OCI-LY7 (cell line): ENCODE measurements at regions of chr11 and their contacts with region 1.

Region 1: GRCh38 chr11:121367001-121367843 is 74.7 kb downstream of the SC5D start:
- DNase-seq: peak; percentile 95
- H3K4me3 ChIP-seq: peak overlapping the region; percentile 35
- H3K27ac ChIP-seq: peak overlapping the region; percentile 98
- H3K4me1 ChIP-seq: peaks cover 86% of the 10 kb centered on the region
- CTCF ChIP-seq: 0 out of 2 replicates have a peak, but pooled peaks have one; percentile 14

Region 2: DNA sequence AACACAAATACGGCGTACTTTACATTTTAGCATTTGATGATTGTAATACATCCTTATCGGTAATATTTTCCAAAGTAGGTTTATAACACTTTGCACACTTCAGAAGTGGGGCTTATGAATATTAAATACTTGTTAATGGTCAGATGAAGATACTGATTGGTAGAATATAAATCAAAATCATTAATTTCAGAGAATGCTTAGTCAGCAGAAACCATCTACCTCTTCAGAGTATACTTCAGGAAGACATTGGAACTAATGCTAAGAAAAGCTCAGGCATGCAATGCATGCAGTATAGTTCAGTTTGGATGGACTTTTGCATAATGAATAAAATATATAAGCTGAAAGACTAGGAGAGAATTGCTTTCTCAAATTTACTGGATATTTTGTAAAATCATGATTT is 285.9 kb before region 1 on chr11:
- CTCF ChIA-PET with region 1: no interaction called
- POLR2A ChIA-PET with region 1: no interaction called
- intact Hi-C with region 1: no loop called
- DNase-seq: no peak
- H3K4me3 ChIP-seq: no peak overlapping the region
- H3K27ac ChIP-seq: no peak overlapping the region
- H3K4me1 ChIP-seq: no peaks in the 10 kb centered on the region
- CTCF ChIP-seq: no peak

Region 3: DNA sequence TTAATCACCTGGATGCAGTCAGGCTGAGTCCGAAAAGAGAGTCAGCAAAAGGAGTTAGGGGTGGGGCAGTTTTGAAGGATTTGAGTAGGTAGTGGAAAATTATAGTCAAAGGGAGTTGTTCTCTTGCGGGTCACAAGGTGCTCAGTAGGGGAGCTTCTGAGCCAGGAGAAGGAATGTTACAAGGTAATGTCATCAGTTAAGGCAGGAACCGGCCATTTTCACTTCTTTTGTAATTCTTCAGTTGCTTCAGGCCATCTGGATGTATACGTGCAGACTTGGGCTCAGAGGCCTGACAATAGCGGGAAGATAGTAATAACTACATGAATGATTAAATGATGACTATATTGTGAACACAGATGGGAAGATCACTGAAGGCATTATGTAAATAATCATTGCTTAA is 68.4 kb before region 1 on chr11:
- CTCF ChIA-PET with region 1: no interaction called
- POLR2A ChIA-PET with region 1: no interaction called
- intact Hi-C with region 1: no loop called
- DNase-seq: no peak
- H3K4me3 ChIP-seq: no peak overlapping the region
- H3K27ac ChIP-seq: no peak overlapping the region
- H3K4me1 ChIP-seq: peaks cover 14% of the 10 kb centered on the region
- CTCF ChIP-seq: no peak

Region 4: DNA sequence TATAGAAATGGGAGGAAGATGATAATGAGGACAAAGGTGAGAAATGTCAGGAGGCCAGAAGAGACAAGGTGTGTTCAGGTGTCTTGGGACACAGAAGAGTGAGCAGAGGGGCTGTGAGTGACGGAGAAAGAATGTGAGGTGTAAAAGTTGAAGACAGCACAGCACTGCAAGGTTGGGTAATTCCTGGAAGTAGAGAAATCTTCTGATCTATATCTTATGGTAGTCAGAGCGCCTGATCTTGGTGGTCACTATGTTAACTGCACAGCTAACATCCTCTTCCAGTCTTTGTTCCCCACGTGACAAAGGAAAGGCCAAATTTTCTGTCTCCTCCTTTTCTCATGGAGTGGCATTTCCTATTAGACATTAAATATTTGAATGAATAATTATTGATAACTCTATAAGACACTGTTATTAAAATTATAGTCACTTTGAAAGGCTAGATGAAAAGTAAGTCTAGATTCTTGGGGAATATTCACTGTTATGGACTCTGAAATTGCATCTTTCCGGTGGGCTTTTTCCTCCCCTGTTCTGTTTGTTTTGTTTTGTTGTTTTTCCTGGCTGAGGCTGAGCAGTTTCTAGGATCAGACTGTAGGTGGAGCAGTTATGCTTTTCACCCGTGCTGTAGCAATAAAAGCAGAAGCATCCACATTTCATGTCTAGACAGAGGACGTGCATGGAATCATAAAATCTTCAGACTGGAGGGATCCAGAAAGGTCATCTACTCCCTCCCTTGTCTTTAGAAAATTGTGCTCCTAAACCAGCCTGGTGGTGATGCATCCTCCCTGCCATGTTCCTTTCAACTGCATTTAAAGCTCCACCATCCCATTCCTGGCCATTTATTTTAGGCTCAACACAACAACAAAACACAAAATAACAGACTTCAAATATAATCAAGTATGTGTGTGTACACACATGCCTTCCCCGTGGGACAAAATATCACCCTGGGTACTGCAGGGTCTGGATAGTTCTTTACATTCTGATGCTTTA is 48.1 kb before region 1 on chr11:
- CTCF ChIA-PET with region 1: no interaction called
- POLR2A ChIA-PET with region 1: interaction called, 29 read pairs
- intact Hi-C with region 1: loop called (anchors 1 kb)
- DNase-seq: peak; percentile 82
- H3K4me3 ChIP-seq: no peak overlapping the region
- H3K27ac ChIP-seq: peak overlapping the region; percentile 1
- H3K4me1 ChIP-seq: peaks cover 58% of the 10 kb centered on the region
- CTCF ChIP-seq: peak; percentile 99

Region 5: DNA sequence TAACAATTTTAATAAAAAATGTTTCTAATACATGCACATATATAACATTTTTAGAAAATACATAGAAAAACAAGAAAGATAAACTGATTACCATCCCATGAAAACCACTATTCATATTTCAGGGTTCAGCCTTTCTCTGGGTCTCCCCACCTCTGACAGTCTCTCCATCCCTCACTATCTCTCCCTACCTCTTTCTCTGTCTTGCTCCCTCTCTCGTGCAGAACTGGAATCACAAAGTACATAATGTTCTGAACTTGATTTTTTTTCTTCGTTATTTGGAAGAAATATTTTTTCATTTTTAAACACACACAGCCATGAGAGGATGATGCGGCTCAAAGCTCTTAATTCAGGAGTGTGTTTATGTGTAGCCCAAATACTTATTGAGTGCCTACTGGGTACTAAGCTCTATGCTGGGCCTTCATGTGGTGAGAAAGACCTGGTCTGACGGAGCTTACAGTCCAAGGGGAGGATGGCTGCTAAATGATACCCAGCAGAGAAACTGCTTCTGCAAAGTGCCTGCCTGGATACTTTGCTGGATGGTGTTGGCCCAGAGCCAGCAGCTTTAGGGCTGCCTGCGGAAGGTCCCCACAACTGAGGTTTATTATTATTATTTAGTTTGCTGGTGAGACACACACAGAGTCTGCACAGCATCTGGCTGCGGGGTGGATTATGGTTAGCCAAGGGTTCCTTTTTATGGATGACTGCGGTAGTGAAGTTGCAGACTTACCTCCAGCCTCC is 32.1 kb before region 1 on chr11:
- CTCF ChIA-PET with region 1: interaction called, 3 read pairs
- POLR2A ChIA-PET with region 1: interaction called, 56 read pairs
- intact Hi-C with region 1: loop called (anchors 2 kb)
- DNase-seq: peak; percentile 43
- H3K4me3 ChIP-seq: no peak overlapping the region
- H3K27ac ChIP-seq: peak overlapping the region; percentile 63
- H3K4me1 ChIP-seq: peaks cover 65% of the 10 kb centered on the region
- CTCF ChIP-seq: peak; percentile 78

Region 6: DNA sequence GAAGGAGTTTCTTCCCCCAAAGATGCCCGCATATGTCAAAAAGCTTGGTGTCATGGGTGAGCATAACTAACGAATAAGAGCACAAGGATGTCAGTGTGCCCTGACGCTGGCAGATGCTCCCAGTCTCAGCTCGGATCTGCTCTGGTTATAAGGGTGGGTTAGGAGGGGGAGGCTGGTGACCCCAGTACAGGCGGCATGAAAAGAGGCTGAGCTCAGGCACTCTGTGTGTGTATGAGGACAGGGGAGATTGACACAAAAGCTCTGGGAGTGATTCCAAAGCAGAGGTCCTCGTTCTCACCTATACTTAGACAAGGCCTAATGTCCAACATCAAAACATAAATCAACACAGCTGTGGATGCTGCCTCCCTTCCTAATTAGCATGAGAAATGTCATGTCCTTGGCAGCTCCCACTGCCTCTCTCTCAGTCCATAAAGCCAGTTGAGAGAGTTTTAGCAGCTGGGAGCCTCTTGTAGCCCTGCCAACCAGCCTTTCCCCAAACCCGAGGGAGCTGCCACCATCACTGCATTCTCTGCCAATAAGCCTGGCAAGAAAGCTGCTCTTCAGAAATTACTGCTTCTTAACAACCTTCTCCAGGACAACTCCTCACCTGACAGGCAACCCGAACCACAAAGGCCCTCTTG is 14.9 kb before region 1 on chr11:
- CTCF ChIA-PET with region 1: interaction called, 5 read pairs
- POLR2A ChIA-PET with region 1: interaction called, 50 read pairs
- intact Hi-C with region 1: no loop called
- DNase-seq: no peak
- H3K4me3 ChIP-seq: no peak overlapping the region
- H3K27ac ChIP-seq: no peak overlapping the region
- H3K4me1 ChIP-seq: peaks cover 52% of the 10 kb centered on the region
- CTCF ChIP-seq: no peak

Region 7: GRCh38 chr11:121406291-121406690 is 39.1 kb after region 1 on chr11:
- CTCF ChIA-PET with region 1: no interaction called
- POLR2A ChIA-PET with region 1: interaction called, 20 read pairs
- intact Hi-C with region 1: no loop called
- DNase-seq: peak; percentile 75
- H3K4me3 ChIP-seq: peak overlapping the region; percentile 56
- H3K27ac ChIP-seq: peak overlapping the region; percentile 92
- H3K4me1 ChIP-seq: peaks cover 71% of the 10 kb centered on the region
- CTCF ChIP-seq: no peak

Region 8: GRCh38 chr11:121426476-121427399 is 59.5 kb after region 1 on chr11:
- CTCF ChIA-PET with region 1: interaction called, 3 read pairs
- POLR2A ChIA-PET with region 1: interaction called, 218 read pairs
- intact Hi-C with region 1: loop called (anchors 1 kb)
- DNase-seq: peak; percentile 84
- H3K4me3 ChIP-seq: peak overlapping the region; percentile 44
- H3K27ac ChIP-seq: peak overlapping the region; percentile 99
- H3K4me1 ChIP-seq: peaks cover 98% of the 10 kb centered on the region
- CTCF ChIP-seq: peak; percentile 67

Region 9: GRCh38 chr11:122020902-122021301 is 653.7 kb after region 1 on chr11:
- CTCF ChIA-PET with region 1: no interaction called
- POLR2A ChIA-PET with region 1: no interaction called
- intact Hi-C with region 1: no loop called
- DNase-seq: peak; percentile 4
- H3K4me3 ChIP-seq: no peak overlapping the region
- H3K27ac ChIP-seq: no peak overlapping the region
- H3K4me1 ChIP-seq: no peaks in the 10 kb centered on the region
- CTCF ChIP-seq: peak; percentile 71

Region 10: GRCh38 chr11:122399375-122399774 is 1032.2 kb after region 1 on chr11:
- CTCF ChIA-PET with region 1: no interaction called
- POLR2A ChIA-PET with region 1: no interaction called
- intact Hi-C with region 1: no loop called
- DNase-seq: no peak
- H3K4me3 ChIP-seq: no peak overlapping the region
- H3K27ac ChIP-seq: no peak overlapping the region
- H3K4me1 ChIP-seq: no peaks in the 10 kb centered on the region
- CTCF ChIP-seq: no peak